Left lung (tissue), 14 donors: ENCODE measurements at regions of chr5 and their contacts with region 1.

Region 1: DNA sequence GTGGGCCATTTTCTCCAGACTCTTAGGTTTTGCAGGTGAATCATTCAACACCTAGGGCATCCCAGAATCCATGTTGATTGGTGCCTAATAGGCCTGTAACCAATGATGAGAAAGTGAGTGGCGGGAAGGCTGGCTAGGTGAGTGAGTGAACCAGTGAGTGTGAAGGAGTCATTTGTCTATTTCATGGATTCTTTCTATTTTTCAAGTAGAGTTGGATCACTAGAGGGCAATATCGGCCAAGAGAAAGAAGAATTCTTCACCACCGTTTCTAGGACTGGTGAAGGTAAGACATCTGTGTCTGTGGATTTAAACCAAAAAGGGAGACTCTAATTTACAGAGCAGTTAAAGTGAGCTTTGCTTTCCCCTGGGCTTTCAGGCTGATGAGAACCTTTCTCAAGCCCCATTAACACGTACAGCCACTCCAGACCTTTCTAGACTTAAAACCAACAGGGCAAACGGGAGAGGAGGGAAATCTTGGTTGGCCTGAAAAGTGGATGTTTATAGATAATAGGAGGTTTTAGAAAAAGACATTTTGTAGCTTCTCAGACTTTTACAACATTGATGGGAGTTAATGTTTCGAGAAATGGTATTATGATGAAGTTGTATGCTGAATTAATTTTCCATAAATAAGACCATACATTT is 114.3 kb upstream of the IL12B start:
- DNase-seq: peak in 2 of 4 donors; percentile 19 to 48
- ATAC-seq: peak; percentile 86
- H3K4me3 ChIP-seq: no peak overlapping the region
- H3K27ac ChIP-seq: no peak overlapping the region
- H3K4me1 ChIP-seq: no peaks in the 10 kb centered on the region
- H3K27me3 ChIP-seq: no peaks in the 10 kb centered on the region
- CTCF ChIP-seq: peak; percentile 12 to 34

Region 2: GRCh38 chr5:159965031-159965837 is 520.7 kb after region 1 on chr5:
- intact Hi-C with region 1: loop called in 1 of 2 experiments (anchors 10 kb)
- DNase-seq: peak in 3 of 4 donors; percentile 52 to 70 (median 58)
- ATAC-seq: peak; percentile 93
- H3K4me3 ChIP-seq: no peak overlapping the region
- H3K27ac ChIP-seq: no peak overlapping the region
- H3K4me1 ChIP-seq: no peaks in the 10 kb centered on the region
- H3K27me3 ChIP-seq: peaks cover 2 to 27% of the 10 kb centered on the region in 2 donors
- CTCF ChIP-seq: peak; percentile 59 to 71

Region 3: GRCh38 chr5:159987031-159987674 is 542.6 kb after region 1 on chr5:
- intact Hi-C with region 1: no loop called
- DNase-seq: peak; percentile 54 to 94 (median 81)
- ATAC-seq: peak; percentile 100
- H3K4me3 ChIP-seq: peak overlapping the region; percentile 32 to 36
- H3K27ac ChIP-seq: no peak overlapping the region
- H3K4me1 ChIP-seq: peaks cover 0 to 8% of the 10 kb centered on the region in 2 donors
- H3K27me3 ChIP-seq: peaks cover 2 to 34% of the 10 kb centered on the region in 2 donors
- CTCF ChIP-seq: peak; percentile 53 to 67